A673 (cell line): ENCODE measurements at regions of chr12 and their contacts with region 1.

Region 1: DNA sequence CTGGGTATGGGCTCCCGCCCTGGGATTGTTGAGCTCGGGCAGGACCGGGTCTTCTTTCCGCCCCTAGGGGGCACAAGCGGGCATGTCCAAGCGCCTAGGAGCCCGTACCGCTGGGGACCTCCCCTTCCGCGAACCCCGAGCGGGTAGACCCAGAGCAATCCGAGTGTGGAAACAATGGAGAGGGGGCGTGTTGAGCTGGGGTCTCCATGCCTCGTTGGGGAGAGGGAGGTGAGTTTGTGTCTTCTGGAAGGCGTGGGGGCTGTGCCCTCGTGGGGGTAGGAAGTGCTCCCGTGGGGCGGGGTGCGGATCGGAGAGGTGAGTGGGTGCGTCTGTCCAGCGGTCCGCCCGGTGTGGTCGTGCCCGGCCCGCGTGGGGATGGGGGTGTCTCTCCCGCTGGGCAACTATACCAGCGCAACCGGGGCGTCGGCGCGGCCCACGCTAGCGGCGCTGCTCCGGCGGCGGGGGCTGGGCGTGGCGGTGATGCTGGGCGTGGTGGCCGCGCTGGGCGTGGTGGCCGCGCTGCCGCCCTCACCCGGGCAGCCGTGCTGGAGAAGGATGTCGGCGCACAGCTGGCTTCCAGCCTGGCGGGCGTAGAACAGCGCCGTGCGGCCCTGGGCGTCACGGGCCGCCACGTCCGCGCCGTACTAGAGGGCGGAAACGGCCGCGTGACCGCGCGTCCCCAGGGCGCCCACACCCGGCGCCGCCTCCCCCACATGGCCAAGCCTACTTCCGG is 12.2 kb downstream of the AGAP2 start:
- DNase-seq: peak; percentile 96
- H3K4me3 ChIP-seq: peak overlapping the region; percentile 82
- H3K27ac ChIP-seq: peak overlapping the region; percentile 90
- H3K4me1 ChIP-seq: peaks cover 7% of the 10 kb centered on the region
- H3K27me3 ChIP-seq: no peaks in the 10 kb centered on the region
- CTCF ChIP-seq: peak; percentile 95

Region 2: GRCh38 chr12:57583008-57583831 is 143.1 kb before region 1 on chr12:
- CTCF ChIA-PET with region 1: interaction called, 4 read pairs
- POLR2A ChIA-PET with region 1: no interaction called
- intact Hi-C with region 1: loop called (anchors 5 kb)
- DNase-seq: peak; percentile 91
- H3K4me3 ChIP-seq: no peak overlapping the region
- H3K27ac ChIP-seq: no peak overlapping the region
- H3K4me1 ChIP-seq: no peaks in the 10 kb centered on the region
- H3K27me3 ChIP-seq: peaks cover 4% of the 10 kb centered on the region
- CTCF ChIP-seq: peak; percentile 98

Region 3: GRCh38 chr12:57744777-57745484 is 18.6 kb after region 1 on chr12 and contains the start of gene TSPAN31:
- CTCF ChIA-PET with region 1: interaction called, 15 read pairs
- POLR2A ChIA-PET with region 1: no interaction called
- intact Hi-C with region 1: no loop called
- DNase-seq: peak; percentile 99
- H3K4me3 ChIP-seq: peak within 1 kb of the TSS; percentile 60
- H3K27ac ChIP-seq: peak within 1 kb of the TSS; percentile 97
- H3K4me1 ChIP-seq: peaks cover 12% of the 10 kb centered on the region
- H3K27me3 ChIP-seq: no peaks in the 10 kb centered on the region
- CTCF ChIP-seq: no peak
- total RNA-seq, gene TSPAN31: 8.9 and 24.6 TPM in 2 replicates

Region 4: GRCh38 chr12:57756406-57757341 is 30.4 kb after region 1 on chr12:
- CTCF ChIA-PET with region 1: no interaction called
- POLR2A ChIA-PET with region 1: interaction called, 17 read pairs
- intact Hi-C with region 1: no loop called
- DNase-seq: no peak
- H3K4me3 ChIP-seq: peak overlapping the region; percentile 60
- H3K27ac ChIP-seq: no peak overlapping the region
- H3K4me1 ChIP-seq: peaks cover 26% of the 10 kb centered on the region
- H3K27me3 ChIP-seq: no peaks in the 10 kb centered on the region
- CTCF ChIP-seq: peak; percentile 73